Lower leg skin (tissue), 4 donors: ENCODE measurements at regions of chr14 and their contacts with region 1.

Region 1: DNA sequence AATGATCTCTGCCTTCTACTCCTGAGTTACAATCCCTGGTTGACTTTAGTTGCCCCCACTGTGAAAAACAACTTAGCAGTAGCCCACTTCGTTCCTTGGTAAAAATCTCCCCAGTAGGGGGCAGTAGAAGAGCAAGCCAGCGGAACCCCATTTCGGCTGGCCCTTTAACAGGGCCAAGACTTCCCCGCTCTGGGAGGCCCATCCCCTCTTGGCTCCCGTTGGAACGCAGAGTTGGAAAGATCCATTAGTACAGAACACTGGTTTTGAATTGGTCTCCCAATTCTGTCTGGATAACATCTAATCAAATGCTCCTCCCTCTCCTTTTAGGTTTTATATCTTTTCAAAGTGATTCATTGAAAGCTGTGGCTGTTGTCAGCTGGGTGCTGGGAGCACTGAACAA is 1133.3 kb downstream of the BCL11B start:
- DNase-seq: peak in 1 of 2 donors; percentile 47
- H3K4me3 ChIP-seq: no peak overlapping the region
- CTCF ChIP-seq: no peak
- POLR2A ChIP-seq: no peak

Region 2: GRCh38 chr14:98633380-98633779 is 494.7 kb after region 1 on chr14:
- intact Hi-C with region 1: no loop called
- DNase-seq: no peak
- H3K4me3 ChIP-seq: no peak overlapping the region
- CTCF ChIP-seq: no peak
- POLR2A ChIP-seq: no peak

Region 3: DNA sequence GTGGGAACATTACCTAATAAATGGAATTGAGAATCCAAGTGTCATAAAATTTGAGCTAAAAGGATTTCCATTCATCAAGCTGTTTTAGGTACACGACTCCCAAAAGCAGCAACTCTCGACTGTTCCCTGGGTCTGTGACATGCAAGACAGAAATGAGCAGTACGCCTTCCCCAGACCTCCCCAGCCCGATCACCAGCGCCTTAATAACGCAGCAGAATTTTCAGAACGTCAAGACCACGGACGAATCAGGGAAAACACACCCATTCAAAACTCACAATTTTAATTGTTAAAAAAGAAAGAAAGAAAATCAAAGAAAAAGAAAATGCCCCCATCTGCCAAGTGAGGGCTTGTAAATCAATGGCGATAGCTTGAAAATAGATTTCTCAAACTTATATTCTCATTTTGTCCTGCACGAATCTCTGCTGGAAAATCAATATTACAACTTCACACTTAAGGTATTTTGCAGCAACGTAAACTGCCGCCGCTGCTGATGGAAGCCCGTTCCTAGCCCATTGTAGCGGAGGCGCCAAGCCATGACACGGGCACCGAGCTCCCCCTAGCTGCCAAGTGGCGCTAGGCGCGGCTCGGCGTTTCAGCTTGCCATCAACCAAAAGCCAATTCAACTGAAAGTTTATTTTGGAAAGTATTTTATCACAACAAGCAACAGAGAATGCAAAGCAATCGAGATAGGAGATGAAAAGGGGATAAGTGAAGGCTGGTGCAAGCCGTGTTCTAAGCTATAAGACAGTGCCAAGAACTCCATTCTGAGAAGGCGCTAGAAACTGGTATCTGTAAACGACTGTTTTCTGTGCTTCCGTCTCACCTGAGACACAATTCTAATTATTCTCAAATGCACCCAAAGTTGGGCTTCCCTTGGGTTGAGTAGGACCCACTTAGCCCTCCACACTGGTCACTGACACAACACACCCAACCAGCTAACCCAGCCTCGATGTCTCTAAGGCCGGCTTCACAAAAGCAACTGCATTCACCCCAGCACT is 1127.8 kb after region 1 on chr14:
- intact Hi-C with region 1: loop called (anchors 10 kb)
- DNase-seq: peak; percentile 84 to 97
- H3K4me3 ChIP-seq: no peak overlapping the region
- CTCF ChIP-seq: peak in 1 of 3 donors; percentile 85
- POLR2A ChIP-seq: no peak